ENCODE measurements at regions of chr2 and their contacts with region 1.

Region 1: DNA sequence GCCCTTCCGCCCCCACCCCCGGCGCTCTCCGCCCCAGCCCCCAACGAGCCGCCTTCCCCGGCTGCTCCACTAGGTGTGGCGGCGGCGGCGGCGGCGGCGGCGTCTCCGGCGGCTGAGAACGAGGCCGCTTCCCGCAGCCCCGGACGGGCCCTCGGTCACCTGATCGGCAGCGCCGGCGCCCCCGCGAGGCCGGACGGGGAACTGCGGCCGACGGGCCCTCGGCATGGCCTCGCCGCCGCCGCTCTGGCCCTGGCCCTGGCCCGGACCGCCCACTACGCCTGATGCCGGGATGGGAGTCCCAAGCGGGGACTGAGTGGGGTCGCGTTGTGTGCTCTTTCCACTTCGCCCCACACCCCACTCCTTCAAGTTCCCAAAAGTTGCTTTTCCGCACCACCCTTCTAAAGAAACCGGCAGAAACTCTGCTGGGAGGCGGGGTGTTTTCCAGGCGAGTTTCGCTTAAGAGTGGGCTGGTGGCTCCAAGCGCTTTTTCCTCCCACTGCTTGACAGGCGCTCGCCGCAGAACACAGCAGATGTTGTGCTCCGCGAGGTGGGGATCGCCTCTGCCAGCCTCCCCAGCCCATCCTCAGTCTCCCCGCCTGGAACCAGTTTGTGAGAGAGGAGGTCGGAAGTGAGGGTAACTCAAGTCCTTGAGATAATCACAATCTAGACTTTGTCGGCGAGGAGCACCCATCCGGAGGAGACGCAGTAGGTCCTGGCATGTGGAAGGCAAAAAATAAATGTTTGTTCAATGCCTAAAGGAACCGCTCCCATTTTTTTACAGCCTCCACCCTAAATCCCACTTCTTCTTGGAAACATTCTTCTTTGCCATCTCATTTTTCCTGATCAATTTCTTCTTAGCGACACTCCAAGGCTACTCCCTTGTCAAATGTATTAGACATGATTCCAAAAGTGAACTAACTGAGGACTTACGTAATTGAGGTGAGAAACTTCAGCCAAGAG is at the start of gene NCKAP1:
- DNase-seq: peak; percentile 95
- H3K4me3 ChIP-seq: peak within 1 kb of the TSS; percentile 87 to 95 (median 89)
- H3K27ac ChIP-seq: peak within 1 kb of the TSS; percentile 97 to 99 (median 98)
- H3K4me1 ChIP-seq: peaks cover 25 to 47% (median 42%) of the 10 kb centered on the region in 4 donors
- H3K27me3 ChIP-seq: no peaks in the 10 kb centered on the region
- CTCF ChIP-seq: peak; percentile 94 to 99 (median 97)
- EP300 ChIP-seq: no peak
- POLR2A ChIP-seq: no peak
- total RNA-seq, gene NCKAP1: 210 to 288 (median 249) TPM

Region 2: GRCh38 chr2:183078465-183079138 is 40.0 kb after region 1 on chr2 and contains the start of gene DUSP19:
- intact Hi-C with region 1: loop called (anchors 2 kb)
- DNase-seq: peak; percentile 98
- H3K4me3 ChIP-seq: peak within 1 kb of the TSS; percentile 64 to 71 (median 70)
- H3K27ac ChIP-seq: peak within 1 kb of the TSS; percentile 85 to 92 (median 86)
- H3K4me1 ChIP-seq: peaks cover 0 to 25% (median 19%) of the 10 kb centered on the region in 4 donors
- H3K27me3 ChIP-seq: no peaks in the 10 kb centered on the region
- CTCF ChIP-seq: no peak
- EP300 ChIP-seq: no peak
- POLR2A ChIP-seq: no peak
- total RNA-seq, gene DUSP19: 2.5 to 7.0 (median 5.0) TPM

Region 3: GRCh38 chr2:183341057-183341456 is 302.4 kb after region 1 on chr2:
- intact Hi-C with region 1: no loop called
- DNase-seq: no peak
- H3K4me3 ChIP-seq: no peak overlapping the region
- H3K27ac ChIP-seq: no peak overlapping the region
- H3K4me1 ChIP-seq: no peaks in the 10 kb centered on the region
- H3K27me3 ChIP-seq: no peaks in the 10 kb centered on the region
- CTCF ChIP-seq: no peak
- EP300 ChIP-seq: no peak
- POLR2A ChIP-seq: no peak